Endothelial cell of umbilical vein (primary cell): ENCODE measurements at regions of chr1 and their contacts with region 1.

Region 1: DNA sequence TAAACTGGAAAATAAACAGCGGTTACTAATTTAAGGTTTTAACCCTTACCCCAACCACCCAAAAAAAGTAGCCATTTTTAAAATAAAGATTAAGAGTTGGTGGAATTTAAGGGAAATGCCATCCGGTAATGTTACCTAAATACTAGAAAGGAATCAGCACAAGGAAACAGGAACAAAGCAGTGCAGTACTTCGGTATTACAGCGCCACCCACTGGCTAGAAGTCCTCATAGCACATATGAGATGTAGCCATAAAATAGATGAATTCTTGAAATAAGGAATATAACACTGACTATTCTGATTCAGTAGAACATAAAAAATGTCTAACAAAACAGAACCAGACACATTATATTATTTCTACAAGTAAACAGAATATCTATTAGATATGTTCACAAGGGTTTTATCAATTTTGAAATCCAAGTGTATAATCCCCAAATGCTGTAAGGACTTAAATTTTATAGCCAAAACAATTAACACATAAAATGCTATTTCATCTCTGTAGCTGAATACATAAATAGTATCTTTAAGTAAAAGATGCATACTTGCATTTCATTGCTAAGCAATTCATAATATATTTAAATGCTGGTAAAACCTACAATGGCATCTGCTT is 58.8 kb downstream of the FRRS1 start:
- DNase-seq: peak; percentile 86
- H3K4me3 ChIP-seq: no peak overlapping the region
- H3K27ac ChIP-seq: no peak overlapping the region
- H3K4me1 ChIP-seq: peaks cover 4% of the 10 kb centered on the region
- H3K27me3 ChIP-seq: no peaks in the 10 kb centered on the region
- CTCF ChIP-seq: peak; percentile 58 to 71
- POLR2A ChIP-seq: no peak

Region 2: GRCh38 chr1:98749152-98749756 is 958.4 kb before region 1 on chr1:
- CTCF ChIA-PET with region 1: interaction called, 18 read pairs
- POLR2A ChIA-PET with region 1: no interaction called
- dilution Hi-C with region 1: no loop called
- intact Hi-C with region 1: no loop called
- DNase-seq: peak; percentile 32
- H3K4me3 ChIP-seq: no peak overlapping the region
- H3K27ac ChIP-seq: no peak overlapping the region
- H3K4me1 ChIP-seq: no peaks in the 10 kb centered on the region
- H3K27me3 ChIP-seq: no peaks in the 10 kb centered on the region
- CTCF ChIP-seq: peak; percentile 10 to 22
- POLR2A ChIP-seq: no peak

Region 3: GRCh38 chr1:98991127-98992012 is 716.3 kb before region 1 on chr1:
- CTCF ChIA-PET with region 1: interaction called, 4 read pairs
- POLR2A ChIA-PET with region 1: no interaction called
- dilution Hi-C with region 1: no loop called
- intact Hi-C with region 1: loop called (anchors 5 kb)
- DNase-seq: peak; percentile 83
- H3K4me3 ChIP-seq: no peak overlapping the region
- H3K27ac ChIP-seq: no peak overlapping the region
- H3K4me1 ChIP-seq: peaks cover 4% of the 10 kb centered on the region
- H3K27me3 ChIP-seq: peaks cover 0 to 4% of the 10 kb centered on the region in 2 experiments
- CTCF ChIP-seq: peak; percentile 10 to 22
- POLR2A ChIP-seq: no peak

Region 4: GRCh38 chr1:99326215-99326949 is 381.3 kb before region 1 on chr1:
- CTCF ChIA-PET with region 1: interaction called, 13 read pairs
- POLR2A ChIA-PET with region 1: no interaction called
- dilution Hi-C with region 1: no loop called
- intact Hi-C with region 1: loop called (anchors 2 kb)
- DNase-seq: peak; percentile 16
- H3K4me3 ChIP-seq: no peak overlapping the region
- H3K27ac ChIP-seq: no peak overlapping the region
- H3K4me1 ChIP-seq: no peaks in the 10 kb centered on the region
- H3K27me3 ChIP-seq: no peaks in the 10 kb centered on the region
- CTCF ChIP-seq: peak in 1 of 2 donors; percentile 32
- POLR2A ChIP-seq: no peak

Region 5: DNA sequence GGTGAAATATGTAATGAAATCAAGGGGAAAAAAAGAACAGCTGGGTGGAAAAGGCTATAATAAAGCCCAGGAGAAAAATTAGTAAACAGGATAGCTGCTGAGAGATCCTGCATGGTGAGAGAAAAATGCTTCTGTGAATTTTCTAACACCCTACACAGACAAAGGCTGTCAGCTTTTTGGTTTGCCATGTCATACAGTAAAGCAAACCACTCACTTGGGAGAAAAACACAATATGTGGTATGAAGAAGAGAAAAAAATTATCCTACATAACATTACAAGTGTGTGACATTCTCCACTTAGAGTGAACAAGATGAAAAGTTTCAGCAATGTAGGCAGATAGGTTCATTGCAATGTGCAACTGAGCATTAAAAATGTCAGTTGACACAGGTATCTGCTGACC is 309.8 kb before region 1 on chr1:
- CTCF ChIA-PET with region 1: no interaction called
- POLR2A ChIA-PET with region 1: no interaction called
- dilution Hi-C with region 1: no loop called
- intact Hi-C with region 1: no loop called
- DNase-seq: no peak
- H3K4me3 ChIP-seq: no peak overlapping the region
- H3K27ac ChIP-seq: no peak overlapping the region
- H3K4me1 ChIP-seq: no peaks in the 10 kb centered on the region
- H3K27me3 ChIP-seq: peaks cover 0 to 5% of the 10 kb centered on the region in 2 experiments
- CTCF ChIP-seq: no peak
- POLR2A ChIP-seq: no peak

Region 6: GRCh38 chr1:99685516-99686180 is 22.0 kb before region 1 on chr1:
- CTCF ChIA-PET with region 1: interaction called, 11 read pairs
- POLR2A ChIA-PET with region 1: interaction called, 3 read pairs
- dilution Hi-C with region 1: no loop called
- intact Hi-C with region 1: loop called (anchors 1 kb)
- DNase-seq: peak; percentile 95
- H3K4me3 ChIP-seq: no peak overlapping the region
- H3K27ac ChIP-seq: peak overlapping the region; percentile 48
- H3K4me1 ChIP-seq: peaks cover 57% of the 10 kb centered on the region
- H3K27me3 ChIP-seq: no peaks in the 10 kb centered on the region
- CTCF ChIP-seq: peak; percentile 63 to 67
- POLR2A ChIP-seq: peak; percentile 67

Region 7: GRCh38 chr1:99766378-99766800 is 58.8 kb after region 1 on chr1 and contains the start of gene FRRS1:
- CTCF ChIA-PET with region 1: no interaction called
- POLR2A ChIA-PET with region 1: no interaction called
- dilution Hi-C with region 1: no loop called
- intact Hi-C with region 1: no loop called
- DNase-seq: peak; percentile 60
- H3K4me3 ChIP-seq: peak within 1 kb of the TSS; percentile 41 to 87 (median 59)
- H3K27ac ChIP-seq: no peak within 1 kb of the TSS
- H3K4me1 ChIP-seq: peaks cover 4% of the 10 kb centered on the region
- H3K27me3 ChIP-seq: peaks cover 0 to 8% of the 10 kb centered on the region in 2 experiments
- CTCF ChIP-seq: no peak
- POLR2A ChIP-seq: no peak
- total RNA-seq, gene FRRS1: 3.1 and 4.8 TPM in 2 replicates